ENCODE measurements at regions of chr3 and their contacts with region 1.

Region 1: DNA sequence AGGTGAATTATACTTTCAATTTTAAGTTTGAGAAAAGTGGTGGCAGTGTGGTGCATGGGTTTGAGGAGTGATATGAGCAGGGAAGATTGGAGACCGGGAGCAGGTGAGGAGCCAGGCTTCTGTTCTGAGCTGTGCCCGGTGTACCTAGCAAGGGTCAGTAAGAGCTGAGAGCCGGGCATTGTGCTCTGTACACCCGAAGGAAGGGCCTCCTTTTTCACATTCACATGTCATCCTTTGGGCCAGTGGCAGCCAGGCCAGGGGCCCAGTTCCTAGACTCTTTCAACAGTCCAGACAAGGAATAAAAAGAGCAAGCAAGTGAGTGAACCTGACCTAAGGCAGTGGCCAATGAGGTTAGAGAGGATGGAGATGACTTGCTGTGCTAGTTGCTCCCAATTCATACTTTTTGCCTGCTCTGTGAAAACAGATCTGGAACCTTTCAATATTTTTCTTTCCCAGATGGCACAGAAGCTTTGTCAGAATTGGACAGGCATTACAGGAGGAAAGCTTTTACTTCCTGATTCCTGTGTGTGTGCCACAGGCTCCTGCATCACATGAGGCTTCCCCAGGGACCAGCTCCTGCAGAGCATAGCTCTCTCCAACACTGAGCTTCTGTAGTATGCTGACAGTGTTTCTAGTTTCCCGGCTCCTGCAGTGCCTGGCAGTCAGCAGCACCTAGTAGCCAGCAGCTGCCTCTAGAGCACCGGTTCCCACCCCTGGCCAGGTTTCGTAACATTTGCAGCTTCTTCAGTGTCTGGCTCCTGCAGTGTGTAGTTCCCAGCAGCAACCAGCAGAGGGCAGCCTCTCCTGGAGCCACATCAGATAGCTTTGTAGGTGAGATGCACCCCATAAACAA is 5.3 kb upstream of the TRA2B start:
- DNase-seq: peak; percentile 90
- H3K4me3 Mint-ChIP-seq: no peak overlapping the region
- H3K27ac Mint-ChIP-seq: no peak overlapping the region
- H3K4me1 Mint-ChIP-seq: peaks cover 23% of the 10 kb centered on the region
- H3K27me3 Mint-ChIP-seq: no peaks in the 10 kb centered on the region
- CTCF ChIP-seq: peak; percentile 99

Region 2: GRCh38 chr3:185659942-185660921 is 282.9 kb before region 1 on chr3:
- CTCF ChIA-PET with region 1: interaction called, 24 read pairs
- intact Hi-C with region 1: no loop called
- DNase-seq: peak; percentile 86
- H3K4me3 Mint-ChIP-seq: no peak overlapping the region
- H3K27ac Mint-ChIP-seq: no peak overlapping the region
- H3K4me1 Mint-ChIP-seq: peaks cover 12% of the 10 kb centered on the region
- H3K27me3 Mint-ChIP-seq: no peaks in the 10 kb centered on the region
- CTCF ChIP-seq: peak; percentile 99

Region 3: DNA sequence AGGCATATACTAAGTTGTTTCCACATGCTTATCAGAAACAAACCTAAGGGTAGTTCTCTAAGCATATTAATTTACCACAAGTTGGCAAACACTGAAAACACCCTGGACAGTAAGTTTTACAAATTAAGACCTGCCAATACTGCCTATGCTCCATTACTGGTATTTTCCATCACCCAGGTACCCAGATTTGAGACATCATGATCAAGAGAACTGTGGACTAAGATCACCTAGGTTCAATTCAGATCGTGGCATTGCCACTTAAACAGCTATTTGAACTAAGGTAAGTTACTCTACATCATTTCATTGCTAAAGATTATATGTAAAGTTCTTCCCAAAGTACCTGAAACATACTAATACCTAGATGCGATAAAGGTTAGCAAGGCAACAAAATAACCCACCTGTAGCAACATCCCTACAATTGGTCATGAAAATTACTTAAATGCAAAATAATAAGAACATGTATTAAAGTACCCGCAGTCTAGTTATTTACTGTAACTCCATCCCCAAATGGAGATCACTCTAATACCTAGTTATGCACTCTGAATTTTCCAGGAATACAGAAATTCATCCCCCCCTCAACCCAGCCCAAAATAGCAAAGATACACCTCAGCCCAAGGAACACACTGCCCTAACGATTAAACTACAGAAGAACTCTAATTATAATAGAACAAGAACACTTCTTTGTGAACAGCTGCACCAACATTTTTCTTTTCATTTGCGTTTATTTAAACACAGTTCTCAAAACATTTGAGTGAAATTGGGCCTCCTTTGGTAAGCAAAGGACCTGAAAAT is 26.9 kb before region 1 on chr3:
- CTCF ChIA-PET with region 1: no interaction called
- intact Hi-C with region 1: no loop called
- DNase-seq: no peak
- H3K4me3 Mint-ChIP-seq: no peak overlapping the region
- H3K27ac Mint-ChIP-seq: peak overlapping the region; percentile 42
- H3K4me1 Mint-ChIP-seq: peaks cover 10% of the 10 kb centered on the region
- H3K27me3 Mint-ChIP-seq: no peaks in the 10 kb centered on the region
- CTCF ChIP-seq: no peak

Region 4: GRCh38 chr3:185929192-185930151 is 13.7 kb before region 1 on chr3:
- CTCF ChIA-PET with region 1: interaction called, 10 read pairs
- intact Hi-C with region 1: no loop called
- DNase-seq: no peak
- H3K4me3 Mint-ChIP-seq: peak overlapping the region; percentile 95
- H3K27ac Mint-ChIP-seq: peak overlapping the region; percentile 41
- H3K4me1 Mint-ChIP-seq: peaks cover 89% of the 10 kb centered on the region
- H3K27me3 Mint-ChIP-seq: no peaks in the 10 kb centered on the region
- CTCF ChIP-seq: no peak

Region 5: DNA sequence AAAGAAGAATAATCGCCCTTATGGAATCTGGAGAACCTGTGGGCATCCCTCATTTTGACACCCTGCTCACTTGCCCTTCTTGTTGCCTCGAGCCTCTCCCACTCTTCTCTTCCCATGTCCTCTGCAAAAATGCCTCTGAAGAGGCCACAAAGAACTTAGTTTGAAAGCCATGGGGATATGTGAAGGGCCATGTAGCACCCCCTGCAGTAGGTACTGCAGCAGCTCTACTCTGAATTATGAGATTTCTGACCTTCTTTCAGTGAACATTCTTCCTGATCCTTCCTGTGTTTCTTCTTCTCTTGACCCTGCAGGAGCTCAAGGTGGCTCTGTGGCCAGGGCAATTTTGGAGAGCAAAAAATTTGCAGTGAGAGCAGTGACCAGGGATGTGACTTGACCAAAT is 25.0 kb after region 1 on chr3:
- CTCF ChIA-PET with region 1: interaction called, 12 read pairs
- intact Hi-C with region 1: no loop called
- DNase-seq: no peak
- H3K4me3 Mint-ChIP-seq: no peak overlapping the region
- H3K27ac Mint-ChIP-seq: no peak overlapping the region
- H3K4me1 Mint-ChIP-seq: no peaks in the 10 kb centered on the region
- H3K27me3 Mint-ChIP-seq: no peaks in the 10 kb centered on the region
- CTCF ChIP-seq: no peak

Region 6: DNA sequence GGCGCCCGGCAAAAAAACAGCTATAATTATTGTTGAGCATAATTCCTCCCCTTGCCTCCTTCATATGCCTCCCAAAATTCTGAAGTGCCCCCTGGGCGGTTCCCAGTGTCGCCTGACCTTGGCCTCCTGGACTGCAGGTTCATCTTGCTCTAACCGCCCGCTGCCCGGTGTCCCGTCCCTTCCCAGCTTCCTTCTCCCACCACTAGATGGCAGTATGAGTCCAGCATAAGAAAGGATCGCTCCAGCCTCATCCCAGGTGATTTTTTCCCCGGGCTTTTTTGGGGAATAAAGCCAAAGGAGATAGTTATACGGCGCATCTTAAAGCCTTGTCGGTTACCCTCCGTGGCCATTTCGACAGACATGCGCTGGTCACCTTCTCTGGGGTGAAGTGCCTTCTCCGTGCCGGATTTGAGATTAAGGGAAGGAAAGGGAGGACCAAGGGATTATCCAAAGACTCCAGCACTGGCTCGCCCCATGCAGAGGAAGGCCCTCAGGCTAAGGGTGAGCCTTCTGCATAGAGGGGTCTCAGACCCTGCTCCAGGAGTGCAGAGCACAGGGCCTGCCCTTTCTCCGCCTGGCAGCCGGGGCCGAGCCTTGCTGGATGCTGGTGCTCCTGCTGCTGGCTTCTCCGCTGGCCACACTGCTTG is 40.5 kb after region 1 on chr3:
- CTCF ChIA-PET with region 1: interaction called, 19 read pairs
- intact Hi-C with region 1: no loop called
- DNase-seq: peak; percentile 87
- H3K4me3 Mint-ChIP-seq: no peak overlapping the region
- H3K27ac Mint-ChIP-seq: no peak overlapping the region
- H3K4me1 Mint-ChIP-seq: peaks cover 17% of the 10 kb centered on the region
- H3K27me3 Mint-ChIP-seq: peaks cover 16% of the 10 kb centered on the region
- CTCF ChIP-seq: peak; percentile 98